Transverse colon (tissue), 4 donors: ENCODE measurements at regions of chr3 and their contacts with region 1.

Region 1: DNA sequence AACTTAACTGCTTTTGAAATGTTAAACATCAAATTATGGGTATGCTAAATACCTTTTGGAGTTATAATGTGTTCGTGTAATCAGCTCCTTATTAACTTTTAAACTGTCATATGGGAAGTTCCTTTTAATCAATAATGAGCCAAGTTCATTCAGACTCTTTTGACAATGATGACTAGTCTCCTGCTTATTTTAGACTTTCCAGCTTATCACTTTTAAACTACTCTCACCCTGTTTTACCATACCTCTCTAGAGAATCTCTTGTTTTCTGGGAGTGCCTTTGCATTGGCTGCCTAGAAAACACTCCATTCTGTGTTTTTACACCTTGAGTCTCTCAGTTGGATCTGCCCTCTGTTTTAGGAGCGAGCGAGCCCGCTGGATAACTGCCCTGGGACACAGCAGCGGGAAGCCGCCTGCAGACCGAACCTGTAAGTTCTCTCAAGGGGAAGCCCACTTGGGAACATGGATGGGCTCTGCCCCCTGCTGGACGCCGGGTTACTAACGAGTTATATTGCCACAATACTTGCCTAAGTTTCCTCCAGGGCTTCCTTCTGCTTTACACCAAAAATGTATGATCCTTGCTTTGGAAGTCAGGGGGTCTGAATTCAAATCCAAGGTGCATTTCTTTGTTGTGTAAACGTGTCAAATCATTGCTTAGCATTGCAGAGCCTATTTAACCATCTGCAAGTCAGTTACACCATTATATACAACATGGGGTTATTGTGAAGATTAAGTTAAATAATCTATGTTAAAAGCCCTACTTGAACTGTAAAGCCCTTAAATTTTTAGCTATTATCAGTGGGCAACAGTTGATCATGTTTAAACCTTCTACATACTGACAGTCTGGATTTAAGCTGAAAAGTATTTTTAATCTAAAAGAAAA is 71.3 kb downstream of the DHX36 start:
- DNase-seq: peak; percentile 89
- H3K4me3 ChIP-seq: no peak overlapping the region
- H3K27ac ChIP-seq: no peak overlapping the region
- H3K4me1 ChIP-seq: peaks cover 0 to 3% (median 0%) of the 10 kb centered on the region in 4 donors
- H3K27me3 ChIP-seq: no peaks in the 10 kb centered on the region
- CTCF ChIP-seq: peak; percentile 83 to 92 (median 89)
- EP300 ChIP-seq: no peak
- POLR2A ChIP-seq: no peak

Region 2: DNA sequence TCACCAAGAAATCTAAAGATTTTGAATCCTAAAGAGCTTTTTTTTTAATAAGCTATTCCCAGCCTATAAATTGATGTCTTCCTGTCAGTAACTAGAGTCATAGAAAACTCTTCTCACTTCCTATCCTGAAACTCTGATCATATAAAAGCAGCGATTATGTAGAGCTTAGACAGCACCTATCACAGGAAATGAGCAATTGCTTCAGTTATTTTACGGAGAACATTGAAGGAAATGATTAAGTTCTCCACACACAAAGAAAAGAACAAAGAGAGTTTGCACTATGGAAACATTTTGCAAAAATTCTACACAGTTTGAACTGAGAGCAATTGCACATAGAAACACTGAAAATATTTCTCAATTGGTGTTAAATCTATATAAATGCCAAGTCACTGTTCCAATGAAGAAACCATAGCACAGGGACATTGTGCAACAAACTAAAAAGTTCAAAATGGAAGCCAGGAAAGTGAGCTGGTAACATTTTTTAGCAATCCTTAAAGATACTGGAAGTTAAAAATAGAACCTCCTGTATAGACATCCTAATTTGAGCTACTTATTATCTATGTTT is 423.3 kb before region 1 on chr3:
- in situ Hi-C with region 1: no loop called
- intact Hi-C with region 1: no loop called
- DNase-seq: no peak
- H3K4me3 ChIP-seq: no peak overlapping the region
- H3K27ac ChIP-seq: no peak overlapping the region
- H3K4me1 ChIP-seq: no peaks in the 10 kb centered on the region
- H3K27me3 ChIP-seq: no peaks in the 10 kb centered on the region
- CTCF ChIP-seq: no peak
- EP300 ChIP-seq: no peak
- POLR2A ChIP-seq: no peak

Region 3: GRCh38 chr3:154003649-154004048 is 249.3 kb before region 1 on chr3:
- in situ Hi-C with region 1: no loop called
- intact Hi-C with region 1: loop called (anchors 10 kb)
- DNase-seq: no peak
- H3K4me3 ChIP-seq: no peak overlapping the region
- H3K27ac ChIP-seq: no peak overlapping the region
- H3K4me1 ChIP-seq: no peaks in the 10 kb centered on the region
- H3K27me3 ChIP-seq: no peaks in the 10 kb centered on the region
- CTCF ChIP-seq: no peak
- EP300 ChIP-seq: no peak
- POLR2A ChIP-seq: no peak

Region 4: DNA sequence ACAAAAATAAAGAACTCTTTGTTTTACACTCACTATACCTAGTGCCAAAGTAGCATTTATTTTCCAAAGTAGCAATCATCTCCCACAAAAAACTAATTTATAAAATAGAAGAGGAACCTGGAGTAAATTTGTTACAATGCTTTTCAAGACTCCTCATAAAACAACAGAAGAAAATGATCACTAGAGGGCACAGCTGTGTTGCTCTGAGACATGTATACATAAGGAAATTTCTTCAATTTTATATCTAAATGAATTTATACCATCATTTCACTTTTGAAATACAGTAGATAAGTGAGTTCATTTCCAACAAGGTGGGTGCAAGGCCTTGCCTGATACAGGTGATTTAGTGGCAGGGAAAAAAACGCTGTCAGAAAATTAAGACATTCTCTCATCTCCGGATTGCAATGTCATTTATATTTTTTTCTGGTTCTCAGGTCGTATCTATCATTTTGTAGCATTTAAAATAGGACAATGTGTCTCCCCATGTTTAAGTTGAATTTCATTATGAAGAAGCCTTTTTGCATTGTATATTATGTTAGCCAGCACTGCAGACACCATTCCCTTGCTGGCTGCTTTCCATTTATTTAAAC is 157.1 kb before region 1 on chr3:
- in situ Hi-C with region 1: loop called (anchors 5 to 10 kb)
- intact Hi-C with region 1: loop called (anchors 5 kb)
- DNase-seq: no peak
- H3K4me3 ChIP-seq: no peak overlapping the region
- H3K27ac ChIP-seq: no peak overlapping the region
- H3K4me1 ChIP-seq: no peaks in the 10 kb centered on the region
- H3K27me3 ChIP-seq: no peaks in the 10 kb centered on the region
- CTCF ChIP-seq: peak; percentile 31 to 52 (median 44)
- EP300 ChIP-seq: no peak
- POLR2A ChIP-seq: no peak

Region 5: GRCh38 chr3:154102225-154102624 is 150.8 kb before region 1 on chr3:
- in situ Hi-C with region 1: loop called (anchors 5 to 10 kb)
- intact Hi-C with region 1: loop called (anchors 5 kb)
- DNase-seq: no peak
- H3K4me3 ChIP-seq: no peak overlapping the region
- H3K27ac ChIP-seq: no peak overlapping the region
- H3K4me1 ChIP-seq: no peaks in the 10 kb centered on the region
- H3K27me3 ChIP-seq: no peaks in the 10 kb centered on the region
- CTCF ChIP-seq: no peak
- EP300 ChIP-seq: no peak
- POLR2A ChIP-seq: no peak

Region 6: DNA sequence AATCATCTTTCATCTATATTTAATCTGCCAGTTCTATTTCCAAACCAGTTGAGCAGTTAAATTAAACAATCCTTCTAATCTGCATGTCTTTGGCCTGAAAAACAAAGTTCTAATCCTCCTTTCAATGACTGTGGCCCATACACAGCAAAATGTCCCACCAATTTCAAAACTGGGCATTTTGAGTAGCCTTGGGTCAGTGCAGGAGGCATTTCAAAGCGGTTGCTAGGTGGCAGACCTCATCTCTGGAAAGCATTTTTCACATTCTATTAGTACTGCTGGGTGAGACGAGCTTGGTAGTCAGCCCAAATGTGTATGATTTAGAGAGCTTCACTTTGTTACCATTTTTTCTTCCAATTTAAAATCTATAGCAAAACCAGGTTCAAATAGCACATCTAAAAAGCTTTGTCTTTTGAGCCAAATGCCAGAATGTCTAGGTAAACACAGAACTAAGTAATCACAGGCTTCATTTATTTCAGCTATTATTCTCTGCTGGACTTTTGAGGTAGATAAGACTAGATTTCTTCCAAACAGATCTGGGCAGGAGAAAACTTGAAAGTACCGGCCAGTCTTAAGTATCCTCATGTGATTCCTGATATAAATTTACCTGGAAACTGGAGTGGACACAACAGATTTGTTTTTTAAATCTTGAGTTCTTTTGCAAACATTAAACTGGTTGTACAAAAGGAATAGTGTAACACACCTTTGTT is 140.7 kb before region 1 on chr3:
- in situ Hi-C with region 1: no loop called
- intact Hi-C with region 1: loop called (anchors 5 kb)
- DNase-seq: no peak
- H3K4me3 ChIP-seq: no peak overlapping the region
- H3K27ac ChIP-seq: no peak overlapping the region
- H3K4me1 ChIP-seq: peaks cover 0 to 4% (median 0%) of the 10 kb centered on the region in 4 donors
- H3K27me3 ChIP-seq: no peaks in the 10 kb centered on the region
- CTCF ChIP-seq: no peak
- EP300 ChIP-seq: no peak
- POLR2A ChIP-seq: no peak

Region 7: DNA sequence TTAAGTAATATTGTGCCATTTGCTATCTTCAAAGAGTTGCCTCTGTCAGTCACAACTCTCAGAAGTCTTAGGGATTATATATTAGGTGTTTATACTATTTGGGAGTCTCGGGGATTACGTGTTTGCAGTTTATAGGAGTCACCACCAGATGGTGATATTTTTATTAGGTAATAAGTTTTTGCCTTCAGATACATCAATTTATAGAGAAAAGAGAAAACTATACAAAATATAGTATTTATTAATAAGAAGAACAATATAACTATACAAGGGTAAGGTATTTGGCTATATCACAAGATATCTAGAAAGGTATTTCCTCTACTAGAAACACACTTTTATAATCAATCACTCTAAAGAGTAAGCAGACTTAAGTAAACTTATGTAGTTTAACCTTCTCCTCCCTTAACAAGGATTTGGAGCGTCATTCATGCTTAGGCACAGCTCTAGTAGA is 82.0 kb after region 1 on chr3:
- in situ Hi-C with region 1: no loop called
- intact Hi-C with region 1: no loop called
- DNase-seq: no peak
- H3K4me3 ChIP-seq: no peak overlapping the region
- H3K27ac ChIP-seq: no peak overlapping the region
- H3K4me1 ChIP-seq: no peaks in the 10 kb centered on the region
- H3K27me3 ChIP-seq: no peaks in the 10 kb centered on the region
- CTCF ChIP-seq: peak; percentile 28 to 61 (median 46)
- EP300 ChIP-seq: no peak
- POLR2A ChIP-seq: no peak